ENCODE measurements at regions of chr12 and their contacts with region 1.

Region 1: DNA sequence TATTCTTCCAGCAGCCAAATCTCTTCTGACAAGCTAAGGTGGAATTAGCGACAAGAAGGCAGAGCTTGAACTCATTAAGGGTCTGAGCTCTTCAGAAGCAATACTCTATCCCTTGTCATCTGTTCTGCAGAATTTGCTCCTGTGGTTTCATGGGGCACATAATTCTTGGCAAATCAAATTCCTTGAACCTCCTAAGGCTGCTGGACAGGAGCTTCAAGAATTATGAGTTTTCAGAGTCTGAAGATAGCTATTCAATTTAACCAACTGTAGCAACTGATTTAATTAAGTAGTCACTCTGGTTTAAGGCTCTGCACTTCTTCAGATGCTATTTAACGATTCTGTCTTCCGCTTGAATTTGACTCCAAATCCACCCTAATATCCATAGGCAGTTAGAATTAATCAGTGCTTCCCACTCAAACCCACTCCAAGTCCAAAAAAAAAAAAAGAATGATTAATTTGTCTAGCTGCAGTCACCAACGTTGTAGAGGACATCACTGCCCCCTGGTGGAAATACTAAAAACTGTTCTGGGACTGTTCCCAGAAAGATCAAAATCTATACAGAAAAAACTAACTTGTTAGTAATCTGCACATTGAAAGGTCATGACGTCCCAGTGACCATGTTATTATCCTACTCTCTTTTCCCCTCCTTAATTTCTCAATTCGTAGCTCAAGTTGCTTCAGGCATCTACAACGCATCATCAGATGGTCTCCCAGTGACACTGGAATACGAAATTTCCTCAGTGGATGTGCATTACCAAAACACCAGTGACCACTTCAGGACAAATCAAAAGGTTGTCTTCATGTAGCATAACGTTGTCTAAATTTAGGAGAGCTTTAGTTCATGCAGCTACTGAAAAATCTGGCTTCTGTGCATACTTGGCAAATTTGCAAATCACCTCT is 169.8 kb downstream of the KIF21A start:
- DNase-seq: no peak
- ATAC-seq: no peak

Region 2: GRCh38 chr12:38324896-38325295 is 948.2 kb before region 1 on chr12:
- intact Hi-C with region 1: loop called in 1 of 2 experiments (anchors 5 kb)
- DNase-seq: no peak
- ATAC-seq: no peak

Region 3: GRCh38 chr12:39145175-39145999 is 127.7 kb before region 1 on chr12:
- intact Hi-C with region 1: loop called (anchors 2 to 10 kb)
- DNase-seq: peak; percentile 71
- ATAC-seq: peak; percentile 96

Measured in left cardiac atrium (tissue), 4 donors.